Activated CD4-positive, alpha-beta T cell treated with anti-CD3 and anti-CD28 coated beads for 36 hours (primary cell): ENCODE measurements at regions of chr5 and their contacts with region 1.

Region 1: GRCh38 chr5:142012792-142013388 is at the start of gene GNPDA1:
- DNase-seq: peak; percentile 82
- ATAC-seq: peak; percentile 16
- H3K4me3 Mint-ChIP-seq: peak within 1 kb of the TSS; percentile 83
- H3K27ac Mint-ChIP-seq: peak within 1 kb of the TSS; percentile 93
- H3K4me1 Mint-ChIP-seq: peaks cover 79% of the 10 kb centered on the region
- H3K27me3 Mint-ChIP-seq: no peaks in the 10 kb centered on the region
- total RNA-seq, gene GNPDA1: 75.4 to 77.4 TPM

Region 2: GRCh38 chr5:141618804-141619554 is 393.9 kb before region 1 on chr5 and contains the start of gene DIAPH1:
- CTCF ChIA-PET with region 1: interaction called, 3 read pairs
- POLR2A ChIA-PET with region 1: no interaction called
- intact Hi-C with region 1: loop called in 1 of 2 experiments (anchors 5 kb)
- DNase-seq: peak; percentile 99
- ATAC-seq: peak; percentile 88
- H3K4me3 Mint-ChIP-seq: peak within 1 kb of the TSS; percentile 98
- H3K27ac Mint-ChIP-seq: peak within 1 kb of the TSS; percentile 98
- H3K4me1 Mint-ChIP-seq: peaks cover 64% of the 10 kb centered on the region
- H3K27me3 Mint-ChIP-seq: no peaks in the 10 kb centered on the region
- total RNA-seq, gene DIAPH1: 185 to 212 TPM

Region 3: GRCh38 chr5:142000703-142001484 is 12.0 kb before region 1 on chr5:
- CTCF ChIA-PET with region 1: interaction called, 13 read pairs
- POLR2A ChIA-PET with region 1: no interaction called
- intact Hi-C with region 1: no loop called
- DNase-seq: peak; percentile 55
- ATAC-seq: peak; percentile 59
- H3K4me3 Mint-ChIP-seq: no peak overlapping the region
- H3K27ac Mint-ChIP-seq: peak overlapping the region; percentile 72
- H3K4me1 Mint-ChIP-seq: peaks cover 35% of the 10 kb centered on the region
- H3K27me3 Mint-ChIP-seq: no peaks in the 10 kb centered on the region

Region 4: GRCh38 chr5:142074006-142074405 is 61.1 kb after region 1 on chr5:
- CTCF ChIA-PET with region 1: no interaction called
- POLR2A ChIA-PET with region 1: interaction called, 4 read pairs
- intact Hi-C with region 1: loop called in 1 of 2 experiments (anchors 1 kb)
- DNase-seq: no peak
- ATAC-seq: peak; percentile 77
- H3K4me3 Mint-ChIP-seq: no peak overlapping the region
- H3K27ac Mint-ChIP-seq: peak overlapping the region; percentile 85
- H3K4me1 Mint-ChIP-seq: peaks cover 42% of the 10 kb centered on the region
- H3K27me3 Mint-ChIP-seq: no peaks in the 10 kb centered on the region

Region 5: GRCh38 chr5:142108432-142109330 is 95.8 kb after region 1 on chr5 and contains the start of gene NDFIP1:
- CTCF ChIA-PET with region 1: interaction called, 48 read pairs
- POLR2A ChIA-PET with region 1: interaction called, 46 read pairs
- intact Hi-C with region 1: loop called (anchors 1 kb)
- DNase-seq: peak; percentile 93
- ATAC-seq: peak; percentile 86
- H3K4me3 Mint-ChIP-seq: peak within 1 kb of the TSS; percentile 95
- H3K27ac Mint-ChIP-seq: peak within 1 kb of the TSS; percentile 99
- H3K4me1 Mint-ChIP-seq: peaks cover 67% of the 10 kb centered on the region
- H3K27me3 Mint-ChIP-seq: no peaks in the 10 kb centered on the region
- total RNA-seq, gene NDFIP1: 54.9 to 86.7 TPM

Region 6: GRCh38 chr5:142145106-142145900 is 132.4 kb after region 1 on chr5:
- CTCF ChIA-PET with region 1: interaction called, 120 read pairs
- POLR2A ChIA-PET with region 1: interaction called, 8 read pairs
- intact Hi-C with region 1: loop called (anchors 1 kb)
- DNase-seq: peak; percentile 78
- ATAC-seq: peak; percentile 93
- H3K4me3 Mint-ChIP-seq: no peak overlapping the region
- H3K27ac Mint-ChIP-seq: no peak overlapping the region
- H3K4me1 Mint-ChIP-seq: peaks cover 7% of the 10 kb centered on the region
- H3K27me3 Mint-ChIP-seq: no peaks in the 10 kb centered on the region

Region 7: DNA sequence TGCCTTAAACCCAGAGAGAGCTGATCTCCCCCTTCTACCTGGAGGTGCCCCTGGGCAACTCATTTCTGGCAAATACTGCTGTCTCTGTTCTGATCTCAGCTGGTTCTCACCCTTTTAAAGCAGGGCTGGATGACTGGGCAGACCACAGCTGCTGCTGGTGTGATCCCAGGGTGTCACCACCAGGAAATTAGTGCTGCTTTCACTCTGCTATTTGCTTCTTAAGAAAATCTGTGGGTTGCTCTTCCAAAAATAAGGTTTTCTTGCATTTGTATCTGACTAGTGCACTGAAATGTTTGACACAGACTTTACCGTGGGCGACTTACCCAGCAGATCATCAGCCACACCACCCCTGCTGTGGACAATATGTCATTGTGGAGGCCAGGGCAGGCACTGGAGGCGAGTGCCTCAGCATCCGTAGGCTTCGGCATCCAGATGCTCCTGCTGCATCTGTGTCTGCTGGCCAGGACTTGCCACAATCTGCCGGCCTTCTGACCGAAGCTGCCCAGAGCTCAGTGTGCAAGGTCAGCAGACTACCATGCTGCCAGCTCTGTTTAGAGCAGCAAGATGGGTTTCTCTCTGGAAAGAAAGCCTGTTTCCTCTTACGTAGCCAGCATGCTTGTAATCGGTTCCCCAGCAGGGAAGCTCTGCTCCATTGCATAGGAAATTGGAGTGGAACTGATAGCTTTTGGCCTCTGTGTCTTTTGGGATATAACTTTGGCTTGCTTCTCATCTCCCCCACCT is 770.9 kb after region 1 on chr5:
- CTCF ChIA-PET with region 1: no interaction called
- POLR2A ChIA-PET with region 1: no interaction called
- intact Hi-C with region 1: loop called in 1 of 2 experiments (anchors 10 kb)
- DNase-seq: peak; percentile 88
- ATAC-seq: peak; percentile 93
- H3K4me3 Mint-ChIP-seq: peak overlapping the region; percentile 45
- H3K27ac Mint-ChIP-seq: peak overlapping the region; percentile 82
- H3K4me1 Mint-ChIP-seq: peaks cover 69% of the 10 kb centered on the region
- H3K27me3 Mint-ChIP-seq: no peaks in the 10 kb centered on the region